ENCODE measurements at regions of chr11 and their contacts with region 1.

Region 1: DNA sequence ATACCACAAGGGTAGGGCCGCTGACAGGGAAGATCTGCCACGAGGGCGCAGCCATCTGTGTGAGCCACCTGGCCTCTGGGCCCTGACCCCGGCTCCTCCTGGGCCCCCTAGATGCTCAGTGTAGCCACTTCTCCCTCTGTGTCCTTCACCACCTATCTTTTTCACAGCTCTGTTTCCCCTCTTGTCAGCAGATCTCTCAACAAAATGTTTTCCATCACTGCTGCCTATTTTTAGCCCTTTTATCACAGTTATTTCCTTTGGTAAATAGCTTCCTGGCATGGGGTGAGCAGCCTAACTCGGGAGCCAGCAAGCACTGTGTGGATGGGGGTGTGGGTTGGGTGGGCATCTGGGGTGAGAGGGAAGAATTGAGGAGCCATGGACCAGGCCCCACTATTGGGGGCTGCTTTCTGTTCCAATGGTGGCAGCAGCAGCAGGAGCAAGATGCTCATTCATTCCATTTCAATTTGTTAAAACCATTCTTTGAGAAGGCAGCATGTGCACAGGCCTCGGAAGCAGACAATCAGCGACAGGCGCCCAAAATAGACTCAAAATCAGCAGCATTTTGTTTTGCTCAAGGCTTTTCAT is 135.2 kb upstream of the NAV2 start:
- DNase-seq: no peak
- CTCF ChIP-seq: no peak

Region 2: DNA sequence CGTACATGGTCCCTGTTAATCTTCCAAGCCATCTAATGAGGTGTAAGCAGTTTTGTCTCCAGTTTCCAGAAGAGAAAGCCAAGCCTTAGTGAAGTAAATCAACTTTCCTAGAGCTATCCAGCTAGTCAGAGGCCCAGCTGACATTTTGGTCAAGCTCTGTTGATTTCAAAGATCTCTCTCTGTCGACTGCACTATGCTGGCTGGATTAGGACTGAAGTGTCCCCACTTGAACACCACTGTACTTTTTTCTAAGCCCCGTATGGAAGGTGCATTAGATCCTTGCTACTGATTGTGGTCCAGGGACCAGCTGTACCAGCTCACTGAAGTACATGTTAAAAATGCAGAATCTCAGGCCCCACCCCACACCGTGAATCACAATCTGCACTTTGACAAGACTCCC is 41.4 kb before region 1 on chr11:
- CTCF ChIA-PET with region 1: no interaction called
- POLR2A ChIA-PET with region 1: no interaction called
- DNase-seq: no peak
- CTCF ChIP-seq: no peak

Region 3: DNA sequence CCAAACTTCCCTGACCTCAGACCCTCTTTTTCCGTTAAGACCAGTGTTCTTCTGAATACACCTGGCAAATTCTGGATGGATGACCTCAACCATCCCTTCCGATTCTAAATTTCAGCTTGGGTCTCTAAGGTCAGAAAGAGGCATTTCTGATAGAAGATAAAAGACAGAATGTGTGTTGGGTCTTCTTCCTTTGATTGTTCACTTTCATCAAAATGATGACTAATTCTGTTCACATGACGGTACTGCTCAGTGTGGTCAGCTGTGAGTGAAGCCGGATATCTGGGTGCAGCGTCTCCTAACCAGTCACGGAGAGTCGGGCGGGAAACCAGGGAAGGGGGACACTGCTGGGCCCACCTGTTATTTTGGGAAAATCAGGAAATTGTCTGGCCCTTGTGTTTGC is 16.5 kb before region 1 on chr11:
- CTCF ChIA-PET with region 1: interaction called, 31 read pairs
- POLR2A ChIA-PET with region 1: no interaction called
- DNase-seq: no peak
- CTCF ChIP-seq: no peak

Region 4: GRCh38 chr11:19595840-19596751 is 18.6 kb after region 1 on chr11:
- CTCF ChIA-PET with region 1: no interaction called
- POLR2A ChIA-PET with region 1: no interaction called
- DNase-seq: no peak
- CTCF ChIP-seq: no peak